Calu3 (cell line): ENCODE measurements at regions of chr3 and their contacts with region 1.

Region 1: DNA sequence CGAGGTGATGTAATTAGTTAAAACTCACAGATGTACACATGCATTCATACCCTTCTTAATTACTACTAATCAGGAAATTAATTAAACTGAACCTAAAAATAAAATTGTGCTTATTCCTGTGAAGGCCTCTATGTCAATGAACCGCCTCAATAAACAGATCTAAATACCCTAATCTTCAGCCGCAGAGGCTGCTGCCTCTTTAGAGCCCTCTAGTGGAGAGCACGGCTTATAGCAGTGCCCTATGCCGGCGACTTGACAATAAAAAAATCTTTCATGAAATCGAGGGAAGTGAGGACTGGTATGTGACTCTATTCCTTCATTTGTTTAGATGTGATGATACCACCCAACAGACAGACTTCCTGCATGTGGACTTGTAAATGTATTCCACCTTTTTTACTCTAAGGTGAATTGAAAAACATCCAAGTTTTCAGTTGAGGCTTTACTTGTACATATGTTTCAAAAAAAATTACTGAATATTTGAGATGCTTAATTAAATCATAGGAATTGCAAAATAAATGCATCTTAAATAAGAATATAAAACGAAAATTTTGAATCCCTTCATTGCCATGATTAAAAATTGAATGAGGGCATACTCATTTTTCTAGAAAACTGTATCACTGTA is 8.3 kb upstream of the EPHA3 start:
- DNase-seq: peak; percentile 55
- H3K4me3 Mint-ChIP-seq: no peak overlapping the region
- H3K27ac Mint-ChIP-seq: no peak overlapping the region
- H3K4me1 Mint-ChIP-seq: peaks cover 29% of the 10 kb centered on the region
- H3K27me3 Mint-ChIP-seq: no peaks in the 10 kb centered on the region
- CTCF ChIP-seq: peak; percentile 54

Region 2: DNA sequence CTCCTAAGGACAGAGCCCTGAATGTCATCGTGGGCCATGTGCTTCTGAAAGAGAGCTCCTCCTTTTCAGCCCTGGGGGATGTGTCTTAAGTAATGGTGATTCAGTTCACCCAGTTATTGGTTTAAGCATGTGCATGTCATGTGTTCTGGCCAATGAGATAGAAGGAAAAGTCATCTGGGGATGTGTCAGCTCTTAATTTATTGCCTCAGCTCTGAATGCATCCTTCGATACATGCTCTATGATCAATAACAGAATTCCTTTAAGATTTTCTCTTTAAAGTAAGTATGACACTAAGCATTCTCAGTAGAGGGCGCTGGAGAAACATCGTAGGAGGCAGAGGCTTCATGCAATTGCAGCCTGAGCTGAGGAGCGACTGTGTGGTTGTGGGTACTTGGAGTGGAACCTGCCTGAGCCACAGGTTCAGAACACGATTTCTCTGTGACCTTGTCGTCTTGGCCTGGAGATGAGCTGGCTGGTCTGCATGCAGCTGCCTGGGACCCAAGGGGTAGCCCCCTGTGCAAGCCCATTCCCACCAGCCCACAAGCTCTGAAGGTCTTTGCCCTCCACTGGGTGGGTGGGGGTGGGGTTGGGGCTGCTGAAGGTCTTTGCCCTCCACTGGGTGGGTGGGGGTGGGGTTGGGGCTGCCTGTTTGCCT is 879.8 kb before region 1 on chr3:
- CTCF ChIA-PET with region 1: interaction called, 6 read pairs
- intact Hi-C with region 1: loop called (anchors 1 kb)
- DNase-seq: peak; percentile 75
- H3K4me3 Mint-ChIP-seq: no peak overlapping the region
- H3K27ac Mint-ChIP-seq: no peak overlapping the region
- H3K4me1 Mint-ChIP-seq: no peaks in the 10 kb centered on the region
- H3K27me3 Mint-ChIP-seq: no peaks in the 10 kb centered on the region
- CTCF ChIP-seq: peak; percentile 58

Region 3: GRCh38 chr3:88641033-88641604 is 458.0 kb before region 1 on chr3:
- CTCF ChIA-PET with region 1: no interaction called
- intact Hi-C with region 1: loop called (anchors 5 kb)
- DNase-seq: no peak
- H3K4me3 Mint-ChIP-seq: no peak overlapping the region
- H3K27ac Mint-ChIP-seq: no peak overlapping the region
- H3K4me1 Mint-ChIP-seq: no peaks in the 10 kb centered on the region
- H3K27me3 Mint-ChIP-seq: no peaks in the 10 kb centered on the region
- CTCF ChIP-seq: no peak

Region 4: GRCh38 chr3:88807491-88808100 is 291.5 kb before region 1 on chr3:
- CTCF ChIA-PET with region 1: no interaction called
- intact Hi-C with region 1: loop called (anchors 5 kb)
- DNase-seq: no peak
- H3K4me3 Mint-ChIP-seq: no peak overlapping the region
- H3K27ac Mint-ChIP-seq: peak overlapping the region; percentile 89
- H3K4me1 Mint-ChIP-seq: peaks cover 50% of the 10 kb centered on the region
- H3K27me3 Mint-ChIP-seq: no peaks in the 10 kb centered on the region
- CTCF ChIP-seq: no peak

Region 5: GRCh38 chr3:88926221-88926620 is 172.9 kb before region 1 on chr3:
- CTCF ChIA-PET with region 1: no interaction called
- intact Hi-C with region 1: no loop called
- DNase-seq: no peak
- H3K4me3 Mint-ChIP-seq: no peak overlapping the region
- H3K27ac Mint-ChIP-seq: no peak overlapping the region
- H3K4me1 Mint-ChIP-seq: no peaks in the 10 kb centered on the region
- H3K27me3 Mint-ChIP-seq: no peaks in the 10 kb centered on the region
- CTCF ChIP-seq: no peak

Region 6: DNA sequence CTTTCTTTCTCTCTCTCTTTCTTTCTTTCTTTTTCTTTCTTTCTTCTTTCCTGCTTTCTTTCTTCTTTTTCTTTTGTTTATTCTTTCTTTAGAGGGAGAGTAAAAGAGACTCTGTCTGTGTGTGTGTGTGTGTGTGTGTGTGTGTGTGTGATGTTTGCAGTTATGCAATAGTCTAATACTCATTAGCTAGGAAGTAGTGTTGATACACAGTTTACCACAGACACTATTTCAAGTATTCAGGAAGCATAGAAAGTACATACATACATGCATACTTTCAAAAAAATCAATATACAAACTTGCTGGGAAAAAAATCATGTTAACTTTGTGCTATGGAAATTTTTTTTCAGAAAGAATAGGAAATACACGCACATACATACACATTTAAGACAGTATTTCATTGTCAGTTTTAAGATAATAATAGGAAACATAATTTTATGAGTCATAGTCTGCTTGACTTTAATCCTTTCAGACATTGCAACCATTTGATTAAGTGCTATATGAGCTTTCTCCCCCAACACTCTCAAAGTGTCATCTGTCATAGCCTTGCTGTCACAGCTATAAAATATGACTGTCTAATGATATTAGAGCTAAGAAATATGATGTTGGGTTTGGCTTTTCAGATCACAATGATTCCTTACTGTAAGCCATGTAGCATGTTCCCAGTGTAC is 66.6 kb before region 1 on chr3:
- CTCF ChIA-PET with region 1: no interaction called
- intact Hi-C with region 1: loop called (anchors 5 kb)
- DNase-seq: peak; percentile 34
- H3K4me3 Mint-ChIP-seq: peak overlapping the region; percentile 8
- H3K27ac Mint-ChIP-seq: peak overlapping the region; percentile 72
- H3K4me1 Mint-ChIP-seq: peaks cover 19% of the 10 kb centered on the region
- H3K27me3 Mint-ChIP-seq: no peaks in the 10 kb centered on the region
- CTCF ChIP-seq: no peak